Spleen (tissue), 13 donors: ENCODE measurements at regions of chr7 and their contacts with region 1.

Region 1: GRCh38 chr7:106153891-106154449 is 41.9 kb upstream of the SYPL1 start:
- DNase-seq: peak; percentile 92
- H3K4me3 ChIP-seq: peak overlapping the region in 2 of 8 donors; percentile 15 to 45
- H3K27ac ChIP-seq: no peak overlapping the region
- H3K4me1 ChIP-seq: peaks cover 6 to 35% (median 15%) of the 10 kb centered on the region in 6 donors
- H3K27me3 ChIP-seq: peaks cover 0 to 17% (median 0%) of the 10 kb centered on the region in 7 donors
- CTCF ChIP-seq: peak; percentile 77 to 94 (median 90)
- POLR2A ChIP-seq: no peak

Region 2: DNA sequence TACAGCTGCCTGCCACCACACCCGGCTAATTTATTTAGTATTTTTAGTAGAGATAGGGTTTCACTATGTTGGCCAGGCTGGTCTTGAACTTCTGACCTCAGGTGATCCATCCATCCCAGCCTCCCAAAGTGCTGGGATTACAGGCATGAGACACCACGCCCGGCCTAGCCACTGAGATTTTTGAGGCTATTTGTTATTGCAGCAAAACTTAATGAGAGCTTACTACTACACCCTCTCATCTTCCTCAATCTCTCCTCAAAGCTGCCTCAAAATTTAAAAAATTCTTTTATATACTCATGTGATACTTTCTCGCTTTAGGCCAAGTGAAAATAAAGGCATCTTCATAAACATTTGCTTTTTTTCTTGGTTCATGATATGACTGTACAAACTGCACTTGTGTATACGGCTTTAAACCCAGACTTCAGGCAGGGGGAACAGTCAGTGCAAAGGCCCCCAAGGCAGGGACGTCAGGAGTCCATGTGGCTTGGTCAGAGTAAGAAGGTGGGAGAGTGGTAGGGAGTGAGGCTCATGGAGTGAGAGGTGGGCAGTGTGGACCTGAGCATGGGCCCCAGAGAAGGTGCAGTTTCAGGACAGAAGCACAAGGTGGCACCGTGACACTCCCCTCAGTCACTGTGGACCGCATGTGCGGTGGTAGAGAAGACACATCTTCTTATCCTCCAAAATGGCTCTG is 97.3 kb before region 1 on chr7:
- intact Hi-C with region 1: loop called (anchors 2 kb)
- DNase-seq: peak; percentile 90
- H3K4me3 ChIP-seq: no peak overlapping the region
- H3K27ac ChIP-seq: peak overlapping the region in 5 of 8 donors; percentile 58 to 86 (median 78)
- H3K4me1 ChIP-seq: peaks cover 4 to 52% (median 43%) of the 10 kb centered on the region in 6 donors
- H3K27me3 ChIP-seq: no peaks in the 10 kb centered on the region
- CTCF ChIP-seq: peak; percentile 86 to 98 (median 88)
- POLR2A ChIP-seq: no peak